ENCODE measurements at regions of chr14 and their contacts with region 1.

Region 1: DNA sequence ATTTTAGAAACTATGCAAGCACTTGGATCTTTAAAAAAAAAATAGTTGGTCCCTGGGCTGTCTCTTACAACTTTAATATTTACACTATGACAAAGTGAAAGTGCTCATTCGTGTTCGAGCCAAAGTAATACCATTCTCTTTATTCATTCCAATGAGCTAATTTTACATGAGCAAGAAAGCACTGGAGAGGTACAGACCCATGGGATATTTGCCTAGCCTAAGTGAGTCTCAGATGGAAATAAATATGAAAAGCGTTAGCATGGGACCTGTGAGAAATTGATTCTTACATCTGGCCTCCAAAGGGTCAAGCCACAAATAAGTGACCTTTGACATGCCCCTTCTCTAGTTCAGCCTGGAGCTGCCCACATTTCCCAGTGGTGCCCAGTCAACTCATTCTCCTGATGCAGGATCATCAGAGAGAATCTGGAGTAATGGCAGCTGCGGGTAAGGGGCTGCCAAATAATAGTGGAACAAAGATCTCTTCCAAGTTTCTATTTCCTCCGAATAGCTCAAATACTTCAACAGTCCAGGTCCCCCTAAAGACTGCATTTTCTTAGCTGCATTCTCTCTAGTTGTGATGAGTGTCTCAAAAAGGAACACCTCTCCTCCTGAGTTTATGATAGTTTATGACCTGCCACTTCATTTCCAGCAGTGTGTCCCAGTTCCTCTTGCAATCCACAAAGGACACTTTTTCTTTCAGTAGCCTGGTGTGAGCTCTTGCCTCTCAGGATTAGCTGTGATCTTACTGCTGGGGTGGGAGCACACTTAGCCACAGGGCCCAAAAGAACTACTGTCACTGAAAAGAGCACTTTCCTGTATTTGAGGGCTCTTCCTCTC is 208.2 kb downstream of the DAD1 start:
- DNase-seq: no peak
- ATAC-seq: no peak
- H3K4me3 ChIP-seq: no peak overlapping the region
- H3K27ac ChIP-seq: no peak overlapping the region
- H3K4me1 ChIP-seq: peaks cover 39% of the 10 kb centered on the region
- H3K27me3 ChIP-seq: no peaks in the 10 kb centered on the region
- CTCF ChIP-seq: no peak
- EP300 ChIP-seq: no peak
- POLR2A ChIP-seq: no peak
- RAD21 ChIP-seq: no peak

Region 2: DNA sequence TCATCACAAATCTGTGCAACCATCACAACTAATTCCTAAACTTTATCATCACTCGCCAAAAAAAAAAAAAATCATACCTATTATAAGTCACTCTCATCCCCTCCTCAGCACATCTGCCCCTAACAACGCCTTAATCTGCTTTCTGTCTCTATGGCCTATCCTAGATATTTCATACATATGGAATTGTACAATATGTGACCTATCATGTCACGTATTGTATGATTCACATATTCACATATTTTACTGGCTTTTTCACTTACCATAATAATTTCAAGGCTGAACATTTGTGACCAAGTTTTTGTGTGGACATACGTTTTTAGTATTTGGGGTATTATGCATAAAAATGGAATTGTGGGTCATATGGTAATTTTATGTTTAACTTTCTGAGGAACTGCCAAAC is 192.5 kb before region 1 on chr14:
- CTCF ChIA-PET with region 1: no interaction called
- POLR2A ChIA-PET with region 1: no interaction called
- RAD21 ChIA-PET with region 1: no interaction called
- SMC1A ChIA-PET with region 1: no interaction called
- in situ Hi-C with region 1: no loop called
- intact Hi-C with region 1: no loop called
- DNase-seq: no peak
- ATAC-seq: no peak
- H3K4me3 ChIP-seq: no peak overlapping the region
- H3K27ac ChIP-seq: no peak overlapping the region
- H3K4me1 ChIP-seq: no peaks in the 10 kb centered on the region
- H3K27me3 ChIP-seq: peaks cover 1 to 6% of the 10 kb centered on the region in 2 experiments; a peak in 1 of 4 replicates
- CTCF ChIP-seq: no peak
- EP300 ChIP-seq: no peak
- POLR2A ChIP-seq: no peak
- RAD21 ChIP-seq: no peak

Region 3: GRCh38 chr14:22213120-22213519 is 167.7 kb before region 1 on chr14:
- CTCF ChIA-PET with region 1: no interaction called
- POLR2A ChIA-PET with region 1: no interaction called
- RAD21 ChIA-PET with region 1: no interaction called
- SMC1A ChIA-PET with region 1: no interaction called
- in situ Hi-C with region 1: no loop called
- intact Hi-C with region 1: no loop called
- DNase-seq: no peak
- ATAC-seq: no peak
- H3K4me3 ChIP-seq: no peak overlapping the region
- H3K27ac ChIP-seq: no peak overlapping the region
- H3K4me1 ChIP-seq: no peaks in the 10 kb centered on the region
- H3K27me3 ChIP-seq: no peaks in the 10 kb centered on the region; a peak in 1 of 4 replicates
- CTCF ChIP-seq: no peak
- EP300 ChIP-seq: no peak
- POLR2A ChIP-seq: no peak
- RAD21 ChIP-seq: no peak

Region 4: DNA sequence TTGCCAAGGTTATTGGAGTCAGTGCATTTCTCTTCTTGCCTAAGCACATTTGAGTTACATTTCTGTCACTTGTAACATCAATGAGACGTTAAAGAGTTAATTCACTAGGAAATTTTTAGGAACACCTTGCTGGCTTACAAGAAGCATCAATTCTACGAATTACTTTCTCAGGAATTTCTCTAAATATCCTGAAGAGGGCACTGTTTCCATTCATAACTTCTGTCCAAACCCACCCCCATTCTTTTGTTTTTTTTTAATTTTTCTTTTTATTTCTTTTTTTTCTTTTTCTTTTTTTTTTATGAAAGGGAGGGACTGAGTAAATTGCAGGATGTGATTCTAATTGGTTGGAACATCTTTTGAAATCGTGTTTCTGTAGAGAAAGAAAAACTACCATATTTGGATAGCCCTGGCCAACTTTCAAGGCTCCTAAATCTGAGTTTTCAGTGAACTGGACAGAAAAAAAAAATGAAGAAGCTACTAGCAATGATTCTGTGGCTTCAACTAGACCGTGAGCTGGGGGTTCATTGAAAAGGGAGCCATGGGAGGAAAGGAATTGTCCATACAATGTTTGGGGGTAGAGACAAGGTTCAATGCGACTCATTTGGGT is 77.1 kb before region 1 on chr14:
- CTCF ChIA-PET with region 1: interaction called, 22 read pairs
- POLR2A ChIA-PET with region 1: interaction called, 3 read pairs
- RAD21 ChIA-PET with region 1: interaction called, 8 read pairs
- SMC1A ChIA-PET with region 1: interaction called, 14 read pairs
- in situ Hi-C with region 1: no loop called
- intact Hi-C with region 1: no loop called
- DNase-seq: no peak
- ATAC-seq: no peak
- H3K4me3 ChIP-seq: no peak overlapping the region
- H3K27ac ChIP-seq: no peak overlapping the region
- H3K4me1 ChIP-seq: no peaks in the 10 kb centered on the region
- H3K27me3 ChIP-seq: 0 out of 4 replicates have a peak, but pooled peaks cover 0 to 5% of the 10 kb centered on the region in 2 experiments
- CTCF ChIP-seq: peak; percentile 39 to 48 (median 44); a peak in 4 of 6 replicates
- EP300 ChIP-seq: no peak
- POLR2A ChIP-seq: no peak
- RAD21 ChIP-seq: peak; percentile 61

Region 5: DNA sequence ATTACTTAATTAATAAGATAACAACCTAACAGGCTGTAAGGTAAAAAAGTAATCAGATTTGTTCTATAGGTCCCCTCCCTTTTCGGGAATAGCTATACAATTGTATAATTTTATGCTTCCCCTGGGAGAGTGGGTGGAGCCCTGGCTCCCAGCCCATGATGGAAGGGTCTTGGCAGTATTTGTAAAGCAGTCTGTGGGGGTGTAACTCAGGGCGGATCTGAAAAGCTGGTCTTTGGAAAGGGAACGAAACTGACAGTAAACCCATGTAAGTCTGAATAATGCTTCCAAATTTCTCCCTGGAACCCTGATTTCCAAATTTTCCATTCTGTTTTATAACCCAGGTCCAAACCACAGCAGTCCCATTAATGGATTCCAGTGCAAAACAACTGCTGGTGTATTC is 97.9 kb after region 1 on chr14:
- CTCF ChIA-PET with region 1: interaction called, 32 read pairs
- POLR2A ChIA-PET with region 1: interaction called, 73 read pairs
- RAD21 ChIA-PET with region 1: interaction called, 272 read pairs
- SMC1A ChIA-PET with region 1: interaction called, 912 read pairs
- in situ Hi-C with region 1: no loop called
- intact Hi-C with region 1: no loop called
- DNase-seq: no peak
- ATAC-seq: peak; percentile 5; the same call in 1 of the 3 replicates
- H3K4me3 ChIP-seq: peak overlapping the region; percentile 66; the same call in 1 of the 2 replicates
- H3K27ac ChIP-seq: peak overlapping the region; percentile 98
- H3K4me1 ChIP-seq: peaks cover 71% of the 10 kb centered on the region
- H3K27me3 ChIP-seq: no peaks in the 10 kb centered on the region
- CTCF ChIP-seq: no peak
- EP300 ChIP-seq: 0 out of 4 replicates have a peak, but pooled peaks of 1 of the 2 experiments have one; percentile 1
- POLR2A ChIP-seq: no peak
- RAD21 ChIP-seq: no peak

Measured in GM12878 (cell line).